HAP-1 (cell line): ENCODE measurements at regions of chr16 and their contacts with region 1.

Region 1: GRCh38 chr16:54929090-54930004 is 1.3 kb upstream of the IRX5 start:
- DNase-seq: peak; percentile 95 to 100
- H3K4me3 ChIP-seq: peak overlapping the region; percentile 66
- H3K4me1 ChIP-seq: peaks cover 12% of the 10 kb centered on the region
- H3K27me3 ChIP-seq: no peaks in the 10 kb centered on the region

Region 2: GRCh38 chr16:53773150-53773846 is 1156.0 kb before region 1 on chr16:
- in situ Hi-C with region 1: loop called (anchors 25 kb)
- DNase-seq: peak; percentile 60 to 82
- H3K4me3 ChIP-seq: no peak overlapping the region
- H3K4me1 ChIP-seq: peaks cover 39% of the 10 kb centered on the region
- H3K27me3 ChIP-seq: no peaks in the 10 kb centered on the region

Region 3: GRCh38 chr16:54473226-54473993 is 455.9 kb before region 1 on chr16:
- in situ Hi-C with region 1: no loop called
- DNase-seq: no peak
- H3K4me3 ChIP-seq: no peak overlapping the region
- H3K4me1 ChIP-seq: no peaks in the 10 kb centered on the region
- H3K27me3 ChIP-seq: no peaks in the 10 kb centered on the region

Region 4: DNA sequence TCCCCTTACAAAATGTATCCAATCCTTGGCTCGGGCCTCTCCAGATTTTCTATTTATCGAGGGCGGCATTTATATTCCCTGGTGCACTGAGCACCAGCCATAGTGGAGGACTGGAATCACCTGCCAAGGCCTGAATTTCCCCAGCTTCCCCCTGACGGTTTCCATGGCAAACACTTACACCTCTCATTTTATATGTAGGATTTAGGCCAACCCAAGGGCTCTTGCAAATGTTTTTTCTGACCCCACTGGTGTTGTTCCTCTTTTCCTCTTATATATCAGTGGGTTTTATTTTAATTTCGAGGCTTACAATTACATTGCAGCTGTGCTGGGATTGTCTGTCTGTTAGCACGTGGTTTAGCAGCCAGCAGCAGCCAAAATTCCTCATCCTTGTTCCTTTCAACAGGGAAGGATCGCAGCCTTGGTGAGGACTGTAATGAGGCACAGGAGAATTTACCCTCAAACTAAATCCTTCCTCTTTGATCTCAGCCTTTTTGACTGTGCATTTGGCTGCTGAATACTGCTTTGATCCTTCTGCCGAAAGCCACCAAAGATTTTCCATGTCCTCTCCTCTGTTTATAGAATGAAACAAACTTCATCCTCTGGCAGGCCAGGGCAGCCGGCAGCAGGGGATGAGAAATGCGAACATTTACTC is 972.3 kb after region 1 on chr16:
- in situ Hi-C with region 1: no loop called
- DNase-seq: no peak
- H3K4me3 ChIP-seq: no peak overlapping the region
- H3K4me1 ChIP-seq: no peaks in the 10 kb centered on the region
- H3K27me3 ChIP-seq: no peaks in the 10 kb centered on the region